Activated CD8-positive, alpha-beta memory T cell treated with anti-CD3 and anti-CD28 coated beads, Interleukin-2, amount 10 ng/mL, durations not matched to agents 7 days and 5 days (primary cell): ENCODE measurements at regions of chr1 and their contacts with region 1.

Region 1: DNA sequence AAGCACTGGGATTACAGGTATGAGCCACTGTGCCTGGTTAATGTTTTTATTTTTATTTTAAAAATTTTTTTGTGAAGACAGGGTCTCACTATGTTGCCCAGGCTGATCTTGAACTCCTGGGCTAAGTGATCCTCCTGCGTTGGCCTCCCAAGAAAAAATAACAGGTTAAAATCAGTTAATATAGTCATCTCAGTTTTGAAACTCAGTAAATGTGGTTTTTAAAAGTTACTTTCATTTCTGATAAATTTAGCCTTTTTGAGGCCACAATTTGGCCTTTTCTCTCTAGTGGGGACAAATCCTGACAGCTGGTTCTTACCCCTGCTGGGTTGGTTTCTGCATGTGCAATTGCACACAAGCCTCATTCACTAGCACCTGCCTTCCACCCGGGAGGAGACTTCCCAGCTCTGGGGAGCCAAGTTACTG is 13.3 kb downstream of the PMF1 start:
- DNase-seq: peak; percentile 66
- ATAC-seq: peak; percentile 25
- H3K4me3 Mint-ChIP-seq: peak overlapping the region; percentile 38
- H3K27ac Mint-ChIP-seq: peak overlapping the region; percentile 96
- H3K4me1 Mint-ChIP-seq: peaks cover 64% of the 10 kb centered on the region
- H3K27me3 Mint-ChIP-seq: no peaks in the 10 kb centered on the region

Region 2: GRCh38 chr1:156096640-156097391 is 129.3 kb before region 1 on chr1:
- CTCF ChIA-PET with region 1: interaction called, 18 read pairs
- DNase-seq: peak; percentile 92
- ATAC-seq: peak; percentile 87
- H3K4me3 Mint-ChIP-seq: no peak overlapping the region
- H3K27ac Mint-ChIP-seq: peak overlapping the region; percentile 76
- H3K4me1 Mint-ChIP-seq: peaks cover 42% of the 10 kb centered on the region
- H3K27me3 Mint-ChIP-seq: peaks cover 23% of the 10 kb centered on the region

Region 3: DNA sequence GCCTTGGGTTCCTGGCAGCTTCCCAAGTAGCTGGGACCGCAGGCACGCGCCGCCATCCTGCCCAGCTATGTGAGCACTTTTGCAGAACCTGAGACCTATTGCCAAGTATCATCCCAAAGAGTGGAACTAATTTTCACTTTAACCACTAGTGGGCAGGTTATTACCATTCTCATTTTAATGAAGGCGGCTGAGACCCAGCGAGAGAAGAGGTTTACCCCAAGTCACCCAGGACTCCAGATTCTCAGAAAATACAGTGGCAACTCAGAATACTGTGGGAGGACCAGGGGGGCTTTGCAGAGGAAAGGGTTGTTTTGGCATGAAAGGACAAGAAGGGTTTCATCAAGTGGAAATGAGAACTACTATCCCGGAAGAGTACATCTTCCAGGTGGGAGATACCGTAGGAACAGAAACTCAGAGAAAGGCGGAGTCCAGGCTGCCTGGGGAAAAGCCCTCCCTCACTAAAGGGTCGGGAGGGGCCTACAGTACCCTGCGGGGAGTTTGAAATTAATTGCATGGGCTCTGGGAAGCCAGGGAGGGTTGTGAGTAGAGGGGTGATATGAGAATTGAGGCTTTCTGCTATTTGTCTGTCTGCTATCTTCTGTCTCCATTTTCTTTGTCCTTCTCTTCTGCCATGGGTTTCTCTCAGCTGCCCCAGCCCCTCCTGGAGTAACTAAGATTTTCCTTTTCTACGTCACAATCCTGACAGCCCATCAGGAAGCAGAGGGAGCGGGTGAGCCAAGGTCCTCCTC is 79.9 kb before region 1 on chr1:
- CTCF ChIA-PET with region 1: interaction called, 267 read pairs
- DNase-seq: peak; percentile 70
- ATAC-seq: peak; percentile 90
- H3K4me3 Mint-ChIP-seq: peak overlapping the region; percentile 63
- H3K27ac Mint-ChIP-seq: peak overlapping the region; percentile 91
- H3K4me1 Mint-ChIP-seq: peaks cover 35% of the 10 kb centered on the region
- H3K27me3 Mint-ChIP-seq: no peaks in the 10 kb centered on the region

Region 4: DNA sequence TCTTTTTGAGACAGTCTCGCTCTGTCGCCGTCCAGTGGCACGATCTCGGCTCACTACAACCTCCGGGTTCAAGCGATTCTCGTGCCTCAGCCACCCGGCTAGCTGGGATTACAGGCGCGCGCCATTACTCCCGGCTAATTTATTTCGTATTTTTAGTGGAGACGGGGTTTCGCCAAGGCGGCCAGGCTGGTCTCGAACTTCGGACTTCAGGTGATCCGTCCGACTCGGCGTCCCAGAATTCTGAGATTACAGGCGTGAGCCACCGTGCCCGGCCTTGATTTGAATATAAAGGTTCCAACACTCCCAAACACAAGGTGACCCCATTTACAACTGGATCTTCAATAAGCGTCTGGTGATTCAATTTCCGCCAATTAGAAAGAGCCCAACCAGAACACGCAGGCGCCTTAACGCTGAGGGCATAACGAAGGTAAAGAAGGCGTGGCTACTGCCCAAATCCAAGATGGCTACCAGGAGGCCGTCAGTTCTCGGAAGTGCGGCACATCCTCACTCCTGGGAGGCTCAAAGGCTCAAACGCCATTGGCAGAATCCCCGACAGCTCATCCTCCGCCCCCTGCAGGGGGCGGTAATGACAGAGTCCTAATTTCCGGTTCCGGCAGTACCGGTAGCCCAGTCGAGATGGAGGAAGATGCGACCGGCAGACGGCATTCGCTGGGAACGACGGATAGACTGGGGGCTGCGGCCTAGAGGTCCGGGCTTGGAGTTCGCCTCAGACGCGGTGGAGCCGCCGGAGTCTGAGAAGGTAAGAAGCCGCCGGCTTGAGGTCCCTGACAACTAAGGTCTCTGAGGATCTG is 32.4 kb before region 1 on chr1 and contains the start of gene SLC25A44:
- CTCF ChIA-PET with region 1: interaction called, 47 read pairs
- DNase-seq: peak; percentile 99
- ATAC-seq: peak; percentile 97
- H3K4me3 Mint-ChIP-seq: peak within 1 kb of the TSS; percentile 96
- H3K27ac Mint-ChIP-seq: peak within 1 kb of the TSS; percentile 95
- H3K4me1 Mint-ChIP-seq: peaks cover 55% of the 10 kb centered on the region
- H3K27me3 Mint-ChIP-seq: no peaks in the 10 kb centered on the region
- total RNA-seq, gene SLC25A44: 41.4 to 48.4 TPM

Region 5: GRCh38 chr1:156212833-156213643 is 13.1 kb before region 1 on chr1 and contains the start of gene PMF1:
- CTCF ChIA-PET with region 1: interaction called, 62 read pairs
- DNase-seq: peak; percentile 99
- ATAC-seq: peak; percentile 97
- H3K4me3 Mint-ChIP-seq: peak within 1 kb of the TSS; percentile 97
- H3K27ac Mint-ChIP-seq: peak within 1 kb of the TSS; percentile 98
- H3K4me1 Mint-ChIP-seq: peaks cover 40% of the 10 kb centered on the region
- H3K27me3 Mint-ChIP-seq: no peaks in the 10 kb centered on the region
- total RNA-seq, gene PMF1: 62.8 to 72.5 TPM

Region 6: GRCh38 chr1:156259805-156260204 is 33.7 kb after region 1 on chr1:
- CTCF ChIA-PET with region 1: interaction called, 10 read pairs
- DNase-seq: no peak
- ATAC-seq: no peak
- H3K4me3 Mint-ChIP-seq: no peak overlapping the region
- H3K27ac Mint-ChIP-seq: no peak overlapping the region
- H3K4me1 Mint-ChIP-seq: peaks cover 11% of the 10 kb centered on the region
- H3K27me3 Mint-ChIP-seq: no peaks in the 10 kb centered on the region

Region 7: DNA sequence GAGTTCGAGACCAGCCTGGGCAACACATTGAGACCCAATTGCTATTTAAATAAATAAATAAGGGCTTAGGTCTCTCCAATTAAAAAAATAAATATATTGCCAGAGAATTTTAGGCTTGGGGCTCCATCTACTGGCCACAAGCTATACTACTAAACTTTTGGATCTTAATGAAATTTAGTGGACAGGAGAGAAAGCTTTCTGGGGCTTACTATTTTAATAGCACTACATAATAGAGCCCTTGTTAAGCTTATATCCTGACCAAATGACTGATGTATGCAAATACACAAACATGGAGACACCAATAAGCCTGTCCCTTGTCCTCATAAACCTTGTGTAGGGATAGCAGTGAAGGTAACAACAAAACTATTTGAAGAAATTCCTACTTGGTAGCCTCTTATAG is 93.5 kb after region 1 on chr1:
- CTCF ChIA-PET with region 1: interaction called, 11 read pairs
- DNase-seq: no peak
- ATAC-seq: no peak
- H3K4me3 Mint-ChIP-seq: no peak overlapping the region
- H3K27ac Mint-ChIP-seq: no peak overlapping the region
- H3K4me1 Mint-ChIP-seq: no peaks in the 10 kb centered on the region
- H3K27me3 Mint-ChIP-seq: no peaks in the 10 kb centered on the region

Region 8: GRCh38 chr1:156445789-156446263 is 219.7 kb after region 1 on chr1:
- CTCF ChIA-PET with region 1: no interaction called
- DNase-seq: peak; percentile 86
- ATAC-seq: peak; percentile 84
- H3K4me3 Mint-ChIP-seq: no peak overlapping the region
- H3K27ac Mint-ChIP-seq: no peak overlapping the region
- H3K4me1 Mint-ChIP-seq: peaks cover 15% of the 10 kb centered on the region
- H3K27me3 Mint-ChIP-seq: peaks cover 58% of the 10 kb centered on the region